AG04449 (cell line): ENCODE measurements at regions of chr12 and their contacts with region 1.

Region 1: DNA sequence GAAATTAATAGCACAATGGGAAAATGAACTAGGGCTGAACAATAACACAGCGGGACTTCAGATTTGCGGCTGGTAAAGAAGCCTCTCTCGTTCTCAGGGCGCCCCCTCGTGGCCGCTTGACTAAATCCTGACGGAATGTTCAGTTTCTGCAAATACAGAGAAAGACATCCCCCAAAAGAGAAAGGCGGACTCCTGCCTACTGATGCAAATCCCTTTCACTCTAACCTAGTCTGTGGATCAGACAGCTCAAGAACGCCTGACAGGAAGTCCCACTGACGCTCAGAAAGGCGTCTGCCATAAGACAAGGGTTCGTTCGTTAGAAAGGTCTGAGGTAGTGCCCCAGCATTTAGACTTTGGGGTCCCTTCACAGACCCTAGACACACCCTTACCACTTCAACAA is 2.5 kb downstream of the NUAK1 start:
- DNase-seq: peak; percentile 70
- H3K4me3 ChIP-seq: peak overlapping the region; percentile 89
- CTCF ChIP-seq: peak; percentile 74

Region 2: GRCh38 chr12:105420659-105421240 is 715.5 kb before region 1 on chr12:
- CTCF ChIA-PET with region 1: interaction called, 67 read pairs
- POLR2A ChIA-PET with region 1: interaction called, 5 read pairs
- DNase-seq: peak; percentile 33
- H3K4me3 ChIP-seq: no peak overlapping the region
- CTCF ChIP-seq: peak; percentile 79

Region 3: DNA sequence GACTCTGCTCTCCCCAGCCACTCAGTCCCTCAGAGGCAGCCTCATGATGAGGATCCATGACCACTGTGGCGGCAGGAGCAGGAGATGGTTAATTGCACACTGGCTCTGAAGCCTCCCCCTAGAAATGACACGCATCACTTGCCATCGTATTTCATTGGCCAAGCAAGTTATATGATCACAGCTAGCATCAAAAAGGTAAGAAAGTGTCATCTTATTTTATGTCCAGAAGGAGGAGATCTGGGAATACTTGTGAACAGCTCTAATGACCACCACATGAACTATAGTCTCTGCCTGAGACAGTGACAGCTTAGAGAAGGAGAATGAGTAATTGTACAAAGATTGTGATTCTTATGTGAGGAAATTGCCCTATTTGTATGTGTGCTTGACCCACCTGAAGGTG is 360.9 kb before region 1 on chr12:
- CTCF ChIA-PET with region 1: interaction called, 25 read pairs
- POLR2A ChIA-PET with region 1: interaction called, 4 read pairs
- DNase-seq: peak; percentile 34
- H3K4me3 ChIP-seq: no peak overlapping the region
- CTCF ChIP-seq: peak; percentile 15

Region 4: GRCh38 chr12:106030210-106031175 is 105.8 kb before region 1 on chr12:
- CTCF ChIA-PET with region 1: interaction called, 12 read pairs
- POLR2A ChIA-PET with region 1: interaction called, 13 read pairs
- DNase-seq: peak; percentile 96
- H3K4me3 ChIP-seq: peak overlapping the region; percentile 34
- CTCF ChIP-seq: no peak

Region 5: GRCh38 chr12:106118386-106119130 is 17.7 kb before region 1 on chr12:
- CTCF ChIA-PET with region 1: interaction called, 14 read pairs
- POLR2A ChIA-PET with region 1: interaction called, 4 read pairs
- DNase-seq: no peak
- H3K4me3 ChIP-seq: no peak overlapping the region
- CTCF ChIP-seq: no peak

Region 6: GRCh38 chr12:106149096-106149784 is 13.0 kb after region 1 on chr12:
- CTCF ChIA-PET with region 1: interaction called, 36 read pairs
- POLR2A ChIA-PET with region 1: interaction called, 4 read pairs
- DNase-seq: no peak
- H3K4me3 ChIP-seq: no peak overlapping the region
- CTCF ChIP-seq: peak; percentile 58